Activated B cell treated with CpG ODN at 0.5 μM for 24 hours (primary cell): ENCODE measurements at regions of chr3 and their contacts with region 1.

Region 1: DNA sequence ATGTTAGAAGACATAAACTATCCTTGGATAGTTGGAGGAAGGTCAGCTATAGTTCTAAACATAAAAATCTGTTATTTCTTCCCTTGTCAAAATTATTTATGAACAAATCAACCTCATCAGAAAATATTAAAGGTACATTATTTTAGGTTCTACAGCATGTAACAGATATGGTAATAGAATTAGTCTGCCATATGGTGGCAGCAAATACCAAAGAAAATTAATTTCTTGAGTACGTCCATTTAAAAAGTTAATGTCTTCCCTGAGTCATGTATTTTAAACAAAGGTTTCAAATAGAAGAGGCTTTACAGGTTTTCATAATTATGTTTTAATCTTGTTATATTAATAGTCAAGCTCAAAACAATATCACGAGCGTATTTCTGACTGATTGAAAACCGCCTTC is 17.9 kb upstream of the ANKRD28 start:
- DNase-seq: no peak
- ATAC-seq: no peak
- H3K4me3 Mint-ChIP-seq: no peak overlapping the region
- H3K27ac Mint-ChIP-seq: no peak overlapping the region
- H3K4me1 Mint-ChIP-seq: peaks cover 28% of the 10 kb centered on the region
- H3K27me3 Mint-ChIP-seq: no peaks in the 10 kb centered on the region
- CTCF ChIP-seq: no peak

Region 2: DNA sequence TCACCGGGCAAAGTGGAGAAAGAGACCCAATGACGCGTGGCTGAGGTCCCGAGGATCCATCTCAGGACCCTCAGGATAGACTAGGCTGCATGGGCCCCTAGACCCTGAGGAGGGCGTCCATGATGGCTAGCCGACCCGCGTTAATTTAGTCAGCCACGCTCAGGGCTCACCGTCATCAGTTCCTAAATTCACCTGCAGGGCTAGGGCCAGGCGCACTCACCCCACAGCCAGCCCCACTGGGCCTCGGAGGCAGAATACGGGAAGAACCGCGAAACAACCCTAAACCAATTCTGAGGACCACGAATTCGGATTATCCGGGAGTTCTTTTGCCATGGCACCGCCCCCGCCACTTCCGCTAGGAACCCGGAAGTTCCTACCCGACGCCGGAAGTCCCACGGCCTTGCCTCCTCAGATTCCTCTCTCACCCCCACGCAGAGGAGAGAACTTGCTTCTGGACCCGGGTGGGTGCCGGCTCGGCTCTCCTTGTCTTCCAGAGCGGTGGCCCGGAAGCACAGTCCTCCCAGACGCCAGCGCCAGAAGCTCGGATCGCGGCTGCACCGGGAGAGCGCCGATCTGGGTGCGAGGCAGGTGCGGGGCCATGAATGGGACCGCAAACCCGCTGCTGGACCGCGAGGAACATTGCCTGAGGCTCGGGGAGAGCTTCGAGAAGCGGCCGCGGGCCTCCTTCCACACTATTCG is 388.4 kb before region 1 on chr3 and contains the starts of genes EAF1 and METTL6:
- CTCF ChIA-PET with region 1: no interaction called
- POLR2A ChIA-PET with region 1: no interaction called
- intact Hi-C with region 1: loop called (anchors 10 kb)
- DNase-seq: peak; percentile 76
- ATAC-seq: peak; percentile 92
- H3K4me3 Mint-ChIP-seq: peak within 1 kb of the TSS; percentile 96
- H3K27ac Mint-ChIP-seq: peak within 1 kb of the TSS; percentile 95
- H3K4me1 Mint-ChIP-seq: peaks cover 50% of the 10 kb centered on the region
- H3K27me3 Mint-ChIP-seq: no peaks in the 10 kb centered on the region
- CTCF ChIP-seq: no peak
- total RNA-seq, gene EAF1: 19.2 and 19.7 TPM in 2 replicates
- total RNA-seq, gene METTL6: 18.7 and 20.2 TPM in 2 replicates

Region 3: DNA sequence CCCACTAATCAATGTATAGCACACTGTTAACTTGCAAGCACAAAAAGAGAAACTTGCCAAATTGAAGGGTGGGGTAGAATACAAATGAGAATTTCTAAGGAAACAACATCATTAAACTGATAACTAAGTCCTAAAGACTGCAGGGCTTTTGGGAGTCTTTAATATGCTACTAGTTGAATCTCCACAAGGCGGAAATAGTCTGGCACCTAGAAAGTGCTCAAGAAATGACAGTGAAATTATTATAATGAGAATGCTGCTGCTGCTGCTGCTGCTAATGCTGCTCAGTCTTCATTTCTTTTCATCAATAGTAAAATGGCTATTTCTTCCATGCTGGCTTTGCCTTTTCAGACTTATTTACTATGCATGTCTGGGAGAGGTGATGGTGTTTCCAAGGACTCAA is 122.3 kb before region 1 on chr3:
- CTCF ChIA-PET with region 1: interaction called, 5 read pairs
- POLR2A ChIA-PET with region 1: no interaction called
- intact Hi-C with region 1: loop called (anchors 5 kb)
- DNase-seq: no peak
- ATAC-seq: no peak
- H3K4me3 Mint-ChIP-seq: no peak overlapping the region
- H3K27ac Mint-ChIP-seq: no peak overlapping the region
- H3K4me1 Mint-ChIP-seq: peaks cover 6% of the 10 kb centered on the region
- H3K27me3 Mint-ChIP-seq: no peaks in the 10 kb centered on the region
- CTCF ChIP-seq: no peak

Region 4: DNA sequence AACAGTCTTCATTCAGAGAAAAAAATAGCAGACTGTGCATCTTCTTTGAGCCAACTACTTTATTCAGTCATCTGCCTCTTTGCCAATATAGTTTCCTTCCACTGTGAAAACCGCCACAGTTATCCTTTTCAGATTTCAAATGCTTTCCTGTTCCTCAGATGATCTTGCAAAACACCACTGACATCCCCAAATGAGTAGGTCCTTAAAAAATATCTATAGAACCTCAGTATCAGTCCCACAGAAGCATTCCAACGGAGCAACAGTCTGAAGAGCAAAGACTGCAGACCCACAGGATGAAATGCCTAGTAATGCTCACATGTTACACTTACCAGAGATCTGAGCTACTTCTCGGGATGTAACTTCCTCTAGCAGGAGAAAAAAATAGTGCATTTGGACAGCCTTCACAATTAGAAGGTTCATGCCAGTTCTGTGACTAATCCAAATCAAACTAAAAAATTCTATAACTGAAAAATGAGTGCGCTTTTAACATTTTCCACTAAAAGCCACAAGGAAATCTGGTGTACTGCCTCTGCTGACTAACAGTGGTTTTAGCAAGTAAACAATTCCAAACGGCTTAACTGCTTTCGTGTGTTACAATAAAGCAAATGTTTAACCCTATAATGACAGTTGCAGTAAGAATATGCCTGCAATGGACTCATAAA is 17.9 kb before region 1 on chr3 and contains the start of gene ANKRD28:
- CTCF ChIA-PET with region 1: interaction called, 7 read pairs
- POLR2A ChIA-PET with region 1: no interaction called
- intact Hi-C with region 1: loop called (anchors 2 kb)
- DNase-seq: no peak
- ATAC-seq: peak; percentile 20
- H3K4me3 Mint-ChIP-seq: peak within 1 kb of the TSS; percentile 68
- H3K27ac Mint-ChIP-seq: peak within 1 kb of the TSS; percentile 82
- H3K4me1 Mint-ChIP-seq: peaks cover 66% of the 10 kb centered on the region
- H3K27me3 Mint-ChIP-seq: no peaks in the 10 kb centered on the region
- CTCF ChIP-seq: no peak
- total RNA-seq, gene ANKRD28: 27.5 and 29.9 TPM in 2 replicates

Region 5: GRCh38 chr3:15859507-15860013 is 43.9 kb after region 1 on chr3:
- CTCF ChIA-PET with region 1: no interaction called
- POLR2A ChIA-PET with region 1: interaction called, 3 read pairs
- intact Hi-C with region 1: loop called (anchors 2 kb)
- DNase-seq: peak; percentile 77
- ATAC-seq: peak; percentile 77
- H3K4me3 Mint-ChIP-seq: peak overlapping the region; percentile 99
- H3K27ac Mint-ChIP-seq: peak overlapping the region; percentile 95
- H3K4me1 Mint-ChIP-seq: peaks cover 27% of the 10 kb centered on the region
- H3K27me3 Mint-ChIP-seq: no peaks in the 10 kb centered on the region
- CTCF ChIP-seq: no peak

Region 6: GRCh38 chr3:15936312-15936711 is 120.6 kb after region 1 on chr3:
- CTCF ChIA-PET with region 1: no interaction called
- POLR2A ChIA-PET with region 1: no interaction called
- intact Hi-C with region 1: no loop called
- DNase-seq: no peak
- ATAC-seq: no peak
- H3K4me3 Mint-ChIP-seq: no peak overlapping the region
- H3K27ac Mint-ChIP-seq: no peak overlapping the region
- H3K4me1 Mint-ChIP-seq: no peaks in the 10 kb centered on the region
- H3K27me3 Mint-ChIP-seq: no peaks in the 10 kb centered on the region
- CTCF ChIP-seq: no peak

Region 7: DNA sequence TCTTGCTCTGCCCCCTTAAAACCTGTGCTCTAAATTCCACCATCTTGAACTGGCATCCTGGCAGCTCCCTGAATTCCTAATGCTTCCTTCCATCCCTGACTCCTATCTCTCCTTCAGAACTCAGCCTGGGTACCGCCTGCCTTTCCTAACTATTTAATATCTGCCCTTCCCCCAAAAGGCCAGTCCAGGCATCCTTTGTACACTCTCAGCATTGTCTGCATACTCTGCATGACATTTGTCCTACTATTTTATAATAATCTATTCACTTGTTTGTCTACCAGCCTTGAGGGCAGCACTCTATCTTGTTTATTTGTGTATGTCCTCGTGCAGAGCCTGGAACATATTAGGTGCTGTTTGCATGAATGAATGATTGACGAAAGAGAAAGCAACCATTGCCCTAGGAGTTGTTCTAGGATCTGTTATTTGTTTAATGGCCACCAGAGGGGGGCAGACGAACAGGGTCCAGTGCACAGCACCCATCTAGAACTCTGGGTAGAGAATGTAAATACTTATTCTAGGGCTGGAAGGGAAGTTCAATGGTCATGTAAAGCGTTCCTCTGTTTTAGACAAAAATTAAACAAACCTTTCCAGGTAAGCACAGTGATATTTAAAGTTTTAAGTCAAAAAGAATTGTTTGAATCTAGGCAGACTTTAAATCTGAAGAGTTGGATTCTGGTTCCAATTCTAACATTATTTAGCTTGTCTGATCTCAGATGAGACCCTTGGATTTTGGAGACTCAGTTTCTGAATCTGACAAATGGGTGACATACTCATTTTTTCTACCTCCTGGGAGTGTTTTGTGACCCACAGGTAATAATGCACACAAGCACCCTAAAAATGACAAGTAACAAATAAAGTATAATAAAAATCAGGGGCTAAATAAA is 233.0 kb after region 1 on chr3:
- CTCF ChIA-PET with region 1: interaction called, 3 read pairs
- POLR2A ChIA-PET with region 1: no interaction called
- intact Hi-C with region 1: loop called (anchors 5 kb)
- DNase-seq: no peak
- ATAC-seq: peak; percentile 86
- H3K4me3 Mint-ChIP-seq: no peak overlapping the region
- H3K27ac Mint-ChIP-seq: no peak overlapping the region
- H3K4me1 Mint-ChIP-seq: no peaks in the 10 kb centered on the region
- H3K27me3 Mint-ChIP-seq: peaks cover 2% of the 10 kb centered on the region
- CTCF ChIP-seq: peak; percentile 27

Region 8: DNA sequence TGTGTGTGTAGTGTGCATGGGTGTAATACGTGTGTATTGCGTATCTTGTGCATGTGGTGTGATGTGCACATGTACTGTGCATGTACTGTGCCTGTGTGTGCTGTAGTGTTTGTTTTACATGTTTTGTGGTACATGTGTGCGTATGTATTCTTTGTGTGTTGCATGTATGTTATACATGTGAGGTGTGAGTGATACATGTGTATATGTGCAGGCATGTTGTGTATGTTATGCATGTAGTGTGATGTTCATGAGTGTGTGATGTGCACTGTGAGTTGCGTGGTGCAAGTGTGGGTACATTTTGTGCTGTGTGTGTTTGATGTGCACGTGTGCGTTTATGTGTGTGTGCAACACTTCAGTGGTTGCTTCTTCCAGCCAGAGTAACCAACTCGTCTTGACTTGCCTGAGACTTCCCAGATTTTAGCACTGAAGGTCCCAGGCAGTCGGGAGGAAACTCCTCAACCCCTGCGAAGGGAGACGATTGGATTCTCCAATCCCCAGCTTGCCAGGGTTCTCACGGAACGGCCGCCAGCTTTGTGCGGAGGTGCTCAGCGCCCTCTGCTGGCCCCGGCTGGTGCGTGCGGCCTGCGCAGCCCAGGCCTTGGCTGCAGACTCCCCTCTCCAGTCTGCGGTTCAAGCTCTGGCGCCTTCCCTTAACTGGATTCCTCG is 362.4 kb after region 1 on chr3:
- CTCF ChIA-PET with region 1: interaction called, 6 read pairs
- POLR2A ChIA-PET with region 1: no interaction called
- intact Hi-C with region 1: loop called (anchors 1 kb)
- DNase-seq: peak; percentile 39
- ATAC-seq: peak; percentile 68
- H3K4me3 Mint-ChIP-seq: no peak overlapping the region
- H3K27ac Mint-ChIP-seq: no peak overlapping the region
- H3K4me1 Mint-ChIP-seq: peaks cover 8% of the 10 kb centered on the region
- H3K27me3 Mint-ChIP-seq: peaks cover 18% of the 10 kb centered on the region
- CTCF ChIP-seq: no peak

Region 9: GRCh38 chr3:16286161-16286560 is 470.5 kb after region 1 on chr3:
- CTCF ChIA-PET with region 1: no interaction called
- POLR2A ChIA-PET with region 1: no interaction called
- intact Hi-C with region 1: no loop called
- DNase-seq: no peak
- ATAC-seq: no peak
- H3K4me3 Mint-ChIP-seq: no peak overlapping the region
- H3K27ac Mint-ChIP-seq: peak overlapping the region; percentile 10
- H3K4me1 Mint-ChIP-seq: peaks cover 24% of the 10 kb centered on the region
- H3K27me3 Mint-ChIP-seq: no peaks in the 10 kb centered on the region
- CTCF ChIP-seq: no peak